Heart left ventricle (tissue), 16 donors: ENCODE measurements at regions of chr21 and their contacts with region 1.

Region 1: GRCh38 chr21:43703035-43703880 is 15.7 kb upstream of the PDXK start:
- DNase-seq: peak in 4 of 5 donors; percentile 43 to 82 (median 65)
- ATAC-seq: peak; percentile 65 to 80 (median 76)
- H3K4me3 ChIP-seq: peak overlapping the region in 7 of 12 donors; percentile 1 to 37 (median 20)
- H3K27ac ChIP-seq: peak overlapping the region; percentile 5 to 84 (median 67)
- H3K4me1 ChIP-seq: peaks cover 0 to 21% (median 10%) of the 10 kb centered on the region in 12 donors
- H3K27me3 ChIP-seq: no peaks in the 10 kb centered on the region
- CTCF ChIP-seq: no peak
- POLR2A ChIP-seq: no peak

Region 2: DNA sequence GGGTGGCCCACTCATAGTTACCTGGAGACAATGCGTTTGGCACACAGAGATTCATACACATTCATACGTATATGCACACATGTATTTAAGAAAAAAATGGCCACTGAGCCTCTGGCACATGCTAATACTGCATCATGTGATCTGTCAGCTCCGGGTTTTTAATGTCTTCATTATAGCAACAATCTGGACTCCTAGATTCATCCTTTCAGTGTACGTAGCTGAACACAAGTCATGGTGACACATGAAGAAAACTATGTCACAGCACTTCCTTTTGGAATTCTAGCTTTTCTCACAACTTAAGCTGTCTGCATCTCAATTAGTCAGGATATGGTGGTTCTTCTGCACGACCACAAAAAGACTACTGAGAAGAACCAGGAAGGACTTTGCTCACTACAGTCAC is 68.6 kb before region 1 on chr21:
- intact Hi-C with region 1: no loop called
- DNase-seq: no peak
- ATAC-seq: no peak
- H3K4me3 ChIP-seq: no peak overlapping the region
- H3K27ac ChIP-seq: no peak overlapping the region
- H3K4me1 ChIP-seq: no peaks in the 10 kb centered on the region
- H3K27me3 ChIP-seq: no peaks in the 10 kb centered on the region
- CTCF ChIP-seq: no peak
- POLR2A ChIP-seq: no peak

Region 3: GRCh38 chr21:43659136-43660000 is 43.9 kb before region 1 on chr21 and contains the starts of genes HSF2BP and RRP1B:
- intact Hi-C with region 1: loop called in 1 of 10 experiments (anchors 5 kb)
- DNase-seq: peak; percentile 82 to 91 (median 87)
- ATAC-seq: peak; percentile 72 to 97 (median 92)
- H3K4me3 ChIP-seq: peak within 1 kb of the TSS; percentile 69 to 100 (median 93)
- H3K27ac ChIP-seq: peak within 1 kb of the TSS; percentile 28 to 92 (median 84)
- H3K4me1 ChIP-seq: peaks cover 0 to 33% (median 21%) of the 10 kb centered on the region in 12 donors
- H3K27me3 ChIP-seq: no peaks in the 10 kb centered on the region
- CTCF ChIP-seq: peak in 4 of 12 donors; percentile 4 to 24 (median 10)
- POLR2A ChIP-seq: peak in 1 of 2 donors; percentile 77
- total RNA-seq, gene HSF2BP: 0.32 TPM in 1 of 9 donors, not detected in the others
- total RNA-seq, gene RRP1B: 6.6 to 16.1 (median 9.5) TPM

Region 4: GRCh38 chr21:43758111-43758641 is 54.9 kb after region 1 on chr21:
- intact Hi-C with region 1: loop called in 1 of 10 experiments (anchors 10 kb)
- DNase-seq: no peak
- ATAC-seq: peak in 3 of 4 donors; percentile 28 to 49 (median 46)
- H3K4me3 ChIP-seq: peak overlapping the region in 7 of 12 donors; percentile 10 to 43 (median 22)
- H3K27ac ChIP-seq: peak overlapping the region in 6 of 12 donors; percentile 25 to 82 (median 52)
- H3K4me1 ChIP-seq: peaks cover 0 to 21% (median 0%) of the 10 kb centered on the region in 12 donors
- H3K27me3 ChIP-seq: no peaks in the 10 kb centered on the region
- CTCF ChIP-seq: no peak
- POLR2A ChIP-seq: no peak